Testis (tissue), 5 donors: ENCODE measurements at regions of chrX and their contacts with region 1.

Region 1: GRCh38 chrX:71181910-71182799 is 37.5 kb downstream of the NLGN3 start:
- DNase-seq: peak; percentile 93
- H3K4me3 ChIP-seq: peak overlapping the region; percentile 42 to 56
- H3K27ac ChIP-seq: peak overlapping the region; percentile 89 to 90
- H3K4me1 ChIP-seq: peaks cover 24% of the 10 kb centered on the region
- H3K27me3 ChIP-seq: no peaks in the 10 kb centered on the region
- CTCF ChIP-seq: no peak
- POLR2A ChIP-seq: no peak

Region 2: DNA sequence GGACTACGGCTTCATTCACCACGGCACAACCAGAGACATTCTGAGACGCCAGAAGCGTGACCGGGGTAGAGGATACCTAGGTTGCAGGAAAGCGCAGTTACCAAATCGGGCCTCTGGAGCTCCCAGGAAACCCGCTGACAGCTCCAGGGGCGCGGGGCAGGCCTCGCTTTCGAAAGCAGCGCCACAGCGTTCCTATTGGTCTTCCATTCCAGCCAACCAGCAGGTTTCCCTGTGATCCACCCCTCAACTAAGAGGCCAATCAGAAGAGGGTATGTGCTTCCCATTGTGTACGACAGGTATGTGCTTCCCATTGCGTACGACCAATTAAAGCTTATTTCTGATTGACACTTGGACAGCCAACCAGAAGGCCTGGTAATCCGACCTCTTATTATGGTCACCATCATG is 128.9 kb before region 1 on chrX:
- intact Hi-C with region 1: no loop called
- DNase-seq: peak; percentile 43
- H3K4me3 ChIP-seq: peak overlapping the region in 1 of 2 donors; percentile 3
- H3K27ac ChIP-seq: no peak overlapping the region
- H3K4me1 ChIP-seq: no peaks in the 10 kb centered on the region
- H3K27me3 ChIP-seq: no peaks in the 10 kb centered on the region
- CTCF ChIP-seq: no peak
- POLR2A ChIP-seq: no peak

Region 3: DNA sequence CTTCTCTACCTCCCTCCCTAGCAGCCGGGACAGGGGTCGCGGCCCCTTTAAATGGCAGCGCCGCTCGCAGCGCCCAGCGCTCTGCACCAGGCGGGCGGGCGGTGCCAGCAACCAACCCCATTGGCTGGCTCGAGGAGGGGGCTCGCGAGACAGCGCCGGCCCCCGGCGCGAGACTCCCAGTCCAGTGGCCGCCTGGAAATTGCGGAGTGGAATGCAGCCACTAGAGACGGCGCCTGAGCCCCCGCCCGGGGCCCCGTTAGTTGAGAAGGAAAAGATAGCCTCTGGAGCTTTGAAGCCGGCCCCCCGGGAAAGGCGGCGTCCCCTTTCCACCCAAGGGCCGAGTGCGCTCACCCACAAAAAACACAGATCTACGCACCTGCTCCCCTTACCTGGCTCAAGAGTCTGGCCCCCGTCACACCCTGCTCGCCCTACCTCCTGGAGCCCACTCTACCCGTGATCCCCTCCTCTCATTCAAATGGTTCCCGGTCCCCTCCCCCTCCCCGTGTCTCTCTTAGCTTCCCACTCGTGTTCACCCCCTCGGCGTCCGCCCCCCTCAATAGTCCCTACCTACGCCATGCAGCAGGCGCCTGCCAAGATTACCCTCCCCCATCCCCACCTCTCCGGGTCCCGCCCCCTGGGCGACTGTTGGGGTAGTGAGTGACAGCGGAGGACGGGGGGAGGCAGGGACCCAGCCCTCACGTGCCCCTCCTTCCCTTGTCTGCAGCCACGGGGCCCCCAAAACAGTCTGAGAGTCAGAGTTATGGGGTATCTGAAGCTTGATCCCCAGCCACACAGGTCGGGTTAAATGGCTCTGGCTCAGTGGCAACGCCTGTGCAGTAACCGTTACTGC is 72.2 kb after region 1 on chrX and contains the start of gene ZMYM3:
- intact Hi-C with region 1: loop called (anchors 10 kb)
- DNase-seq: peak; percentile 89
- H3K4me3 ChIP-seq: peak within 1 kb of the TSS; percentile 61 to 65
- H3K27ac ChIP-seq: peak within 1 kb of the TSS; percentile 84 to 87
- H3K4me1 ChIP-seq: peaks cover 10% of the 10 kb centered on the region
- H3K27me3 ChIP-seq: no peaks in the 10 kb centered on the region
- CTCF ChIP-seq: no peak
- POLR2A ChIP-seq: no peak
- total RNA-seq, gene ZMYM3: 67.6 to 97.1 TPM